Activated CD4-positive, alpha-beta T cell treated with anti-CD3 and anti-CD28 coated beads, Interleukin-2, amount 10 ng/mL, durations not matched to agents 7 days and 5 days (primary cell): ENCODE measurements at regions of chr9 and their contacts with region 1.

Region 1: DNA sequence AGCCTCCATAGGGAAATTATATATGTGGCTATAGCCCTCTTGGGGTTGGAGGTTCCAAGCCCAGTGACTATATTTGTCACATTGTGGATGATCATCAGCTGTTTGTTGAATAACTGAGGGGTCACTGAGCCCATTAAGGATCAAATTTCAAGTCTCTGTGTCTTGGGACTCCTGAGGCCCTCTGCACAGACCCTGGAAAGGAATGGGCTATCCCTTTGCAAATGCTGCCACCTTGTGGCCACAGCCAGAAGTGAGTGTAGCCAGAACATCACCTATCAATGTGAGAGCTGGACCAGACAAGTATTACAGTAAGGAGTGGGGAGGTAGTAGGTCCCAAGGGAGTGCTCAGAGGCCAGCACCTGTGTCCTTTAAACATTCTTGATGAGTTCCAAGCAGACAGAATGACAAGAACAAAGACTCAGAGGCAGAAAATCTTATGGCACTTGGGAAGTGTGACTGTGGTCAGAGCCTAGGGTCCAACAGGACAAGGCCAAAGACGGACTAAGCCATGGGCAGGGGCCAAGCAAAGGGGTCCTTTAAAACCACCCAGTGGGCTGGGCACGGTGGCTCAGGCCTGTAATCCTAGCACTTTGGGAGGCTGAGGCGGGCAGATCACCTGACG is 8.2 kb downstream of the RPP25L start:
- DNase-seq: peak; percentile 85
- H3K4me3 Mint-ChIP-seq: no peak overlapping the region
- H3K27ac Mint-ChIP-seq: no peak overlapping the region
- H3K4me1 Mint-ChIP-seq: no peaks in the 10 kb centered on the region
- H3K27me3 Mint-ChIP-seq: peaks cover 8% of the 10 kb centered on the region

Region 2: DNA sequence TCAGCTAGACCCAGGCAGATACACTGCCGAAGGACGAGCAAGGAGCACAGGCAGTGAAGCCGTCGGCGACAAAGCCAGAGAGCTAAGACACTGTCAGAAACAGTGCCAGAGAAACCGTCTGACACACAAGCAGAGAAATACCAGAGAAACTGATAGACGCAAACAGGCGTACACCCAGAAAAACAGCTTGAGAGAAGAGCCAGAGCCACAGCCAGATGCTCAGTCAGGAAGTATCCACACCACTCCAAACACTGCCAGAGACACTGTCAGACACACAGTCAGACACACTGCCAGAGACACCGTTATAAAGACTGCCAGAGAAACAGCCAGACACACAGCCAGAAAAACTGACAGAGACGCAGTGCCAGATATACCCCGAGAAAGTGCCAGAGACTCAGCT is 33.3 kb before region 1 on chr9:
- CTCF ChIA-PET with region 1: no interaction called
- POLR2A ChIA-PET with region 1: no interaction called
- DNase-seq: no peak
- H3K4me3 Mint-ChIP-seq: no peak overlapping the region
- H3K27ac Mint-ChIP-seq: no peak overlapping the region
- H3K4me1 Mint-ChIP-seq: no peaks in the 10 kb centered on the region
- H3K27me3 Mint-ChIP-seq: peaks cover 11% of the 10 kb centered on the region

Region 3: GRCh38 chr9:34620061-34620994 is 16.6 kb after region 1 on chr9 and contains the start of gene DCTN3:
- CTCF ChIA-PET with region 1: interaction called, 11 read pairs
- POLR2A ChIA-PET with region 1: no interaction called
- DNase-seq: peak; percentile 97
- H3K4me3 Mint-ChIP-seq: peak within 1 kb of the TSS; percentile 96
- H3K27ac Mint-ChIP-seq: peak within 1 kb of the TSS; percentile 86
- H3K4me1 Mint-ChIP-seq: peaks cover 29% of the 10 kb centered on the region
- H3K27me3 Mint-ChIP-seq: peaks cover 29% of the 10 kb centered on the region
- total RNA-seq, gene DCTN3: 150 to 153 TPM